ENCODE measurements at regions of chr18 and their contacts with region 1.

Region 1: DNA sequence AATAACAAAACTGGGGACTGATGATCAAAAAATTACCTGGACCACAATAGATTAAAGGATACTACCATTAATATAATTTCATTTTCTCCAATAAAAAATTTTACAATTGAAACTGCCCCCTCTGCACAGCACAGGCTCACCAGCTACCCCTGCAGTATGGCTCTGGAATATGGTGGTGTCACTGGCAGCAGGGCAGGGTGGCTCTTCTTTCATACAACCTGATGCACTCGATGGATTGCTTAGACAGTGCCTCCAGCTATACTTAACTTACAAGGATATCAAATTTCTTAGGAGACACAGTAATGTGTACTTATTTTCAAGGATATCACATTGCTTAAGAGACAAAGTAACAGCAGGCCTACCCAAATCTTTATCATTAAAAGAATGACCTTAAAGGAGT is 124.0 kb downstream of the PRELID3A start:
- DNase-seq: no peak
- H3K4me3 ChIP-seq: no peak overlapping the region
- H3K27ac ChIP-seq: no peak overlapping the region
- H3K4me1 ChIP-seq: peaks cover 7% of the 10 kb centered on the region; the same call in 1 of the 2 replicates
- H3K27me3 ChIP-seq: no peaks in the 10 kb centered on the region

Region 2: GRCh38 chr18:12645254-12646203 is 113.8 kb after region 1 on chr18:
- in situ Hi-C with region 1: loop called (anchors 10 kb)
- DNase-seq: peak; percentile 46
- H3K4me3 ChIP-seq: no peak overlapping the region
- H3K27ac ChIP-seq: peak overlapping the region; percentile 27; the same call in 1 of the 2 replicates
- H3K4me1 ChIP-seq: peaks cover 39% of the 10 kb centered on the region
- H3K27me3 ChIP-seq: no peaks in the 10 kb centered on the region

Region 3: GRCh38 chr18:12668041-12668440 is 136.3 kb after region 1 on chr18:
- in situ Hi-C with region 1: no loop called
- DNase-seq: no peak
- H3K4me3 ChIP-seq: no peak overlapping the region
- H3K27ac ChIP-seq: no peak overlapping the region
- H3K4me1 ChIP-seq: no peaks in the 10 kb centered on the region
- H3K27me3 ChIP-seq: no peaks in the 10 kb centered on the region

Region 4: DNA sequence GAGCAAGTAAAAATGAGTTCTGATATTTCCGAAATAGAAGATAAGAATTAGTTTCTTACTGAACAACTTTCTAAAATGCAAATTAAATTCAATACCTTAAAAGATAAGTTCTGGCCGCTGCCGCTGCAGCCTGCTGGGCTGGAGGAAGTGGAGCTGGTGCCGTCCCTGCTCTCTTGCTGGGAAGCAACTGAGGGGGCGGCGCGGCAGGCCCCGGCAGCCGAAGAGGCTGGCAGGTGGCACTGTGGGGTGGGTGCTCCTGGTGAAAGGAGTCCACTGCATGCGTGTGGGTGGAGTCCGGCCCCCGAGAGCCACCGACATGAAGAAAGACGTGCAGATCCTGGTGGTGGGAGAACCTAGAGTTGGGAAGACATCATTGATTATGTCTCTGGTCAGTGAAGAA is 1689.9 kb after region 1 on chr18:
- in situ Hi-C with region 1: no loop called
- DNase-seq: no peak
- H3K4me3 ChIP-seq: no peak overlapping the region
- H3K27ac ChIP-seq: no peak overlapping the region
- H3K4me1 ChIP-seq: no peaks in the 10 kb centered on the region
- H3K27me3 ChIP-seq: no peaks in the 10 kb centered on the region

Measured in GM23248 (cell line).